Panc1 (cell line): ENCODE measurements at regions of chr9 and their contacts with region 1.

Region 1: GRCh38 chr9:133184962-133185361 is 21.2 kb upstream of the GBGT1 start:
- DNase-seq: peak; percentile 27
- ATAC-seq: peak; percentile 75; the same call in 1 of the 2 replicates
- H3K4me3 ChIP-seq: no peak overlapping the region
- H3K27ac ChIP-seq: no peak overlapping the region
- H3K4me1 ChIP-seq: no peaks in the 10 kb centered on the region
- H3K27me3 ChIP-seq: no peaks in the 10 kb centered on the region; the same call in 1 of the 2 replicates
- CTCF ChIP-seq: peak; percentile 70

Region 2: GRCh38 chr9:133121198-133121939 is 63.6 kb before region 1 on chr9 and contains the start of gene RALGDS:
- CTCF ChIA-PET with region 1: no interaction called
- POLR2A ChIA-PET with region 1: no interaction called
- in situ Hi-C with region 1: no loop called
- intact Hi-C with region 1: no loop called
- DNase-seq: no peak
- ATAC-seq: peak; percentile 91
- H3K4me3 ChIP-seq: peak within 1 kb of the TSS; percentile 53 to 62
- H3K27ac ChIP-seq: peak within 1 kb of the TSS; percentile 57
- H3K4me1 ChIP-seq: peaks cover 36% of the 10 kb centered on the region
- H3K27me3 ChIP-seq: no peaks in the 10 kb centered on the region
- CTCF ChIP-seq: no peak
- total RNA-seq, gene RALGDS: 25.8 TPM

Region 3: GRCh38 chr9:133327834-133328484 is 143.0 kb after region 1 on chr9:
- CTCF ChIA-PET with region 1: interaction called, 17 read pairs
- POLR2A ChIA-PET with region 1: interaction called, 5 read pairs
- in situ Hi-C with region 1: no loop called
- intact Hi-C with region 1: loop called (anchors 2 kb)
- DNase-seq: no peak
- ATAC-seq: no peak
- H3K4me3 ChIP-seq: no peak overlapping the region
- H3K27ac ChIP-seq: no peak overlapping the region
- H3K4me1 ChIP-seq: no peaks in the 10 kb centered on the region; the same call in 1 of the 2 replicates
- H3K27me3 ChIP-seq: no peaks in the 10 kb centered on the region
- CTCF ChIP-seq: no peak

Region 4: DNA sequence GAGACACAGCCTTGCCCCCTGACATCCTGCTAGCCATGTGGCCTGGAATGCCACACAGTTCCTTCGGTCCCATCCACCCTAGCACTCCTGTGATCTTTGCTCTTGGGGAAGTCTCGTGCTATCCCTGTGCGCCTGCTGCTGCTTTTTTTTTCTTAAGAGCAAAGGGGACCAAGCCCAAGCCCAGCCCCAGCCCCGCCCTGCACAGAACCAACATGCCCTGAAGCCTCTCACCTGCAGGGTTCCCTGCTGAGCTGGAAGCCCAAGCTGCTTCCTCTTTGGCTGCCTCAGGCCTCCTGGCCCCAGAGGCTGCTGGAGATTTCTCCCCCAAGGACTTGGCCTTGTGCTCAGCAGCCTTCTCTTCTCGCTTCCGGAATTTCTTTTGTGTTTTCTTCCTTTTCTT is 149.2 kb after region 1 on chr9:
- CTCF ChIA-PET with region 1: interaction called, 17 read pairs
- POLR2A ChIA-PET with region 1: interaction called, 5 read pairs
- in situ Hi-C with region 1: no loop called
- intact Hi-C with region 1: loop called (anchors 2 kb)
- DNase-seq: no peak
- ATAC-seq: no peak
- H3K4me3 ChIP-seq: no peak overlapping the region
- H3K27ac ChIP-seq: no peak overlapping the region; the same call in 1 of the 2 replicates
- H3K4me1 ChIP-seq: peaks cover 6% of the 10 kb centered on the region
- H3K27me3 ChIP-seq: no peaks in the 10 kb centered on the region
- CTCF ChIP-seq: no peak